ENCODE measurements at regions of chr12 and their contacts with region 1.

Region 1: GRCh38 chr12:124713436-124714082 is 146.1 kb upstream of the NCOR2 start:
- DNase-seq: peak; percentile 92
- H3K4me3 Mint-ChIP-seq: peak overlapping the region; percentile 0
- H3K27ac Mint-ChIP-seq: peak overlapping the region; percentile 64
- H3K4me1 Mint-ChIP-seq: peaks cover 21% of the 10 kb centered on the region
- H3K27me3 Mint-ChIP-seq: no peaks in the 10 kb centered on the region

Region 2: GRCh38 chr12:124391340-124392261 is 322.0 kb before region 1 on chr12:
- CTCF ChIA-PET with region 1: no interaction called
- intact Hi-C with region 1: loop called (anchors 1 kb)
- DNase-seq: peak; percentile 77
- H3K4me3 Mint-ChIP-seq: peak overlapping the region; percentile 16
- H3K27ac Mint-ChIP-seq: peak overlapping the region; percentile 88
- H3K4me1 Mint-ChIP-seq: peaks cover 34% of the 10 kb centered on the region
- H3K27me3 Mint-ChIP-seq: no peaks in the 10 kb centered on the region

Region 3: DNA sequence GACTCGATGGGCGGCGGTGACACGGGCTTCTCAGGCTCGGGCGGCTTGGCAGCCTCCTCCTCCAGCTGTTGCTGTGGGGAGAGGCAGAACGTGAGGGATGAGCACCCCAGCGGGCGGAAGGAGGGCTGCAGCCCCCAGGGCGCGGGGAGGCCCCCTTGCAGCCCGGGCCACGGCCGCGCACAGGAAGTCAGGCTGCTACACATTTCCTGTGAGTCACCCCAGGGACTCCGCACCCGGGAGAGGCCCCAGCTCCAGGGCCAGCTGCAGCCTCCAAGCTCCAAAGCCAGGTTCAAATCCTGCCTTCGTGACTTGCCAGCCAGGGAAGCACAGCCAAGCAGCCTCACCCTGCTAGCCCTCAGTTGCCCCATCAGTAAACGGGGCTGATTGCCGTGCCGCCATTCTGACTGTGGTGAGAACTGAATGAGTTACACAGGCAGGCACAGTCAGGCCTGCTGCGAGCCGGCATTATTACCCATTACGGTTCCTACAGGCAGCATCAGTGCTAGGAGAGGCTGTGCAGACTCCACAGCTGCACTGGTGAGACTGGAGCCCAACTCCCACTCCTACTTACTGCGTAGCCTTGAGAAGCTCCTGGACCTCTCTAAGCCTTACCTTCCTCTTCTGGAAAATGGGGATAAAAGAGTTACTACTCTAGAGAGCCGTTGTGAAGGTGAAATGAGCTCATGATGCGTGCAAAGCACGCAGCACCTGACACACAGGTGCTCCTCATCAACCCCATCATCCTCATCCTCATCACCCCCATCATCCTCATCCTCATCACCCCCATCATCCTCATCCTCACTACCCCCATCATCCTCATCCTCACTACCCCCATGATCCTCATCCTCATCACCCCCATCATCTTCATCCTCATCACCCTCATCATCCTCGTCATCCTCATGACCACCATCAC is 247.1 kb before region 1 on chr12:
- CTCF ChIA-PET with region 1: no interaction called
- intact Hi-C with region 1: loop called (anchors 5 kb)
- DNase-seq: peak; percentile 93
- H3K4me3 Mint-ChIP-seq: peak overlapping the region; percentile 21
- H3K27ac Mint-ChIP-seq: peak overlapping the region; percentile 56
- H3K4me1 Mint-ChIP-seq: peaks cover 27% of the 10 kb centered on the region
- H3K27me3 Mint-ChIP-seq: no peaks in the 10 kb centered on the region

Region 4: DNA sequence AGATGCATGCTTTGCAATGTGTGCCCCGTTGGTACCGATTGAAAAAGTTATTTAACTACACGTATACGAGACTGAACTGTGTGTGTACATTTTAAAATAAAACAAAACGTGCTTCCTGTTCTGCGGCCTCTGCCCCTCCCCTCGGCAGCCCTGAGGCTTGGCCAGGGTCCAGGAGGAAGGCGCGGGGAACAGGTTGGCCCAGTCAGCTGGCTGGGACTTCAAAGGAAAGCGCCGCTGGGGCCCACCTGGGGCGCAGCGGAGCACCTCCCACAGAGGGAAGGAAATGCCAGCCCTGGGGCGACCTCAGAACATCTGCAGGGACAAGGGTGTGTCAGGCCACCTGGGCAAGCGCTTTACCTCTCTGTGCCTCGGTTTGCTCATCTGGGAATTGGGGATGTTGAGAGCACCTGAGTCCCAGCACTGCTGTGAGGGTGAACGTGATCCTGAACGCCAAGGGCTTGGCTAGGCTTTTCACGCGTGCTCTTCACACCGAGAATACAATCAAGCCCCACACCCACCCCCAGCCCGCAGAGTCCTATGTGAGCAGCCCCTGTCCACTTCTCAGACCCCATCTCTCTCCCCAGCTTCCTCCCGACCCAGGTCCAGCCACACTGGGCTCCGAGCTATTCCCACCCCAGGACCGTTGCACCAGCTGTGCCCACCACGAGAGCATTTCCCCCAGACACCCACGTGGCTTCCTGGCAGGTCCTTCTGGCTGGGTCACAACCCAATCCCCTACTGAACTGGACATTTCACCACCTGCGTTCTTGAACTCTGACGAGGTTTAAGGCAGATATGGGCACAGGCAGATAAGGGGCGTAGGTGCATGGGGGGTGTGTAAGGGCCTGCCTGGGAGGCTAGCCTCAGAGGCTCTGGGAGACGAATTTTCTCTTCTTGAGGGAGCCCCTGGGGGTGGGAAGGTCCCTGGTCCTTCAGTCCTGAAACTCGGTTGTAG is 104.2 kb before region 1 on chr12:
- CTCF ChIA-PET with region 1: no interaction called
- intact Hi-C with region 1: loop called (anchors 2 kb)
- DNase-seq: peak; percentile 93
- H3K4me3 Mint-ChIP-seq: peak overlapping the region; percentile 33
- H3K27ac Mint-ChIP-seq: no peak overlapping the region
- H3K4me1 Mint-ChIP-seq: peaks cover 21% of the 10 kb centered on the region
- H3K27me3 Mint-ChIP-seq: peaks cover 2% of the 10 kb centered on the region

Region 5: DNA sequence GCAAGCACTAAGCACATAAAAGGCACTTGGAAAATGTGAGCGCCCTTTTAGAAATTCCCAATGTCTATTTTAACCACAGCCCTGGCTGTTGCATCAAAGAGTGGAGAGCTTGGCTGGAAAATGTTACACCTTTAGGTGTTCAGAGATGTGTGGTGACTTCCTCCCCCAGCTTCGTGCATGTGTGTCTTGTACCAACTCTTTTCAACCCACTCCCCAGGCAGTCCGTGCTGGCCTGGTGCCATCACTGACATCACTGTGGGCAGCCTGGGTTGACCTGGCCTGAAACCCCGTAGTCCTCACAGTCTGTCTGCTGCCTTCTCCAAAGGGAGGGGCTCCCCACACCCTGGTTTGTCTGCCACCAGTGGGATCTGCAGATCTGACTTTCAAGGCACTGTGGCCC is 48.3 kb after region 1 on chr12:
- CTCF ChIA-PET with region 1: interaction called, 3 read pairs
- intact Hi-C with region 1: loop called (anchors 1 kb)
- DNase-seq: peak; percentile 59
- H3K4me3 Mint-ChIP-seq: no peak overlapping the region
- H3K27ac Mint-ChIP-seq: no peak overlapping the region
- H3K4me1 Mint-ChIP-seq: peaks cover 36% of the 10 kb centered on the region
- H3K27me3 Mint-ChIP-seq: peaks cover 5% of the 10 kb centered on the region

Region 6: GRCh38 chr12:124786061-124786964 is 72.8 kb after region 1 on chr12:
- CTCF ChIA-PET with region 1: no interaction called
- intact Hi-C with region 1: no loop called
- DNase-seq: no peak
- H3K4me3 Mint-ChIP-seq: no peak overlapping the region
- H3K27ac Mint-ChIP-seq: no peak overlapping the region
- H3K4me1 Mint-ChIP-seq: no peaks in the 10 kb centered on the region
- H3K27me3 Mint-ChIP-seq: no peaks in the 10 kb centered on the region

Region 7: DNA sequence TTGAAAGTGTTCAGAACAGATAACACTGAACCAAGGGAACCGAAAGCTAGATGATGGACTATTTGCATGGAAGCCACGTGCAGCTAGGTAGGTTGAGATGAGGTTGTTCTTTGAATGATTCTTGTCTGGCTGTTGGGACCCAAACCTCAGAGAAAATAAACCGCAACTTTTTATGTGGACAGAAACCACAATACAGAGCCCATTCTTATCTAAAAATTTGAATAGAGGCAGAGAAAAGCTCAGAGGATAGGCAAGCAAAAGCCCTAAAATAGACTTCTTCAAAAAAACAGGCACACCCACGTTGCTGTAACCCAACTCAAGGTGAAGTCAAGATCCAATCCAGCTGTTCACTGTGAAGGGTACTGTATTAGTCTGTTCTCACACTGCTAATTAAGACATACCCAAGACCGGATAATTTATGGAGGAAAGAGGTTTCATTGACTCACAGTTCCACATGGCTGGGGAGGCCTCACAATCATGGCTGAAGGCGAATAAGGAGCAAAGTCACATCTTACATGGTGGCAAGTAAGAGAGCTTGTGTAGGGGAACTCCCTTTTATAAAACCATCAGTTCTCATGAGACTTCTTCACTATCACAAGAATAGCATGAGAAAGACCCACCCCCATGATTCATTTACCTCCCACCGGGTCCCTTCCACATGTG is 705.5 kb after region 1 on chr12:
- CTCF ChIA-PET with region 1: no interaction called
- intact Hi-C with region 1: no loop called
- DNase-seq: no peak
- H3K4me3 Mint-ChIP-seq: no peak overlapping the region
- H3K27ac Mint-ChIP-seq: no peak overlapping the region
- H3K4me1 Mint-ChIP-seq: no peaks in the 10 kb centered on the region
- H3K27me3 Mint-ChIP-seq: no peaks in the 10 kb centered on the region

Measured in activated naive CD4-positive, alpha-beta T cell treated with anti-CD3 and anti-CD28 coated beads for 36 hours (primary cell).